ENCODE measurements at regions of chr7 and their contacts with region 1.

Region 1: DNA sequence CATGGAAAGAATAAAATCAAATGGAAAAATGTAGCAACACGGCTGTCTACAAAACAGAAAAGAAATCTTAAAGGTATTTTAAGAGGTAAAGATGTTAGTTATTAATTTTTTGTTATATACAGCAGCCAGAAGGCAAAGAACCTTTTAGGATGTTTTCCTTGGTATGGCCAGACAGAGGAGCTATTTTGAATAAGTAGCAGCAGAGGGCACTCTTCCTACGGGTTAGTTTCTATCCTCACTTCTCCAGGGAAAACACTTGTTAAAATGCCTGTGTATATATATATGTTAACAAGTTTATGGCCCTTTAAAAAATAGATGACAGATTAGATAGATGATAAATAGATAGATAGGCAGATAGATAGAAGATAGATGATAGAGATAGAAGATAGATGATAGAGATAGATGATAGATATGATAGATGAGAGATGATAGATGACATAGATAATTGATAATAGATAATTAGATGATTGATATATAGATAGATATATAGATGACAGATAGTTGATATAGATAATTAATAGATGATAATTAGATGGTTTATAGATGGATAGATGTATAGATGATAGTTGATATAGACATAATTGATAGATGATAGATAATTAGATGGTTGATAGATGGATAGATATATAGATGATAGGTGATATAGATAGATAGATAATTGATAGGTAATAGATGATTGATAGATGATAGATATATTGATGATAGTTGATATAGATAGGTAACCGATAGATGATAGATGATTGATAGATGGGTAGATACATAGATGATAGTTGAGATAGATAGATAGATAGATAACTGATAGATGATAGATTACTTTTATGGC is 57.8 kb upstream of the WIPF3 start:
- DNase-seq: no peak

Region 2: GRCh38 chr7:29639881-29640595 is 108.5 kb before region 1 on chr7:
- intact Hi-C with region 1: no loop called
- DNase-seq: no peak

Region 3: DNA sequence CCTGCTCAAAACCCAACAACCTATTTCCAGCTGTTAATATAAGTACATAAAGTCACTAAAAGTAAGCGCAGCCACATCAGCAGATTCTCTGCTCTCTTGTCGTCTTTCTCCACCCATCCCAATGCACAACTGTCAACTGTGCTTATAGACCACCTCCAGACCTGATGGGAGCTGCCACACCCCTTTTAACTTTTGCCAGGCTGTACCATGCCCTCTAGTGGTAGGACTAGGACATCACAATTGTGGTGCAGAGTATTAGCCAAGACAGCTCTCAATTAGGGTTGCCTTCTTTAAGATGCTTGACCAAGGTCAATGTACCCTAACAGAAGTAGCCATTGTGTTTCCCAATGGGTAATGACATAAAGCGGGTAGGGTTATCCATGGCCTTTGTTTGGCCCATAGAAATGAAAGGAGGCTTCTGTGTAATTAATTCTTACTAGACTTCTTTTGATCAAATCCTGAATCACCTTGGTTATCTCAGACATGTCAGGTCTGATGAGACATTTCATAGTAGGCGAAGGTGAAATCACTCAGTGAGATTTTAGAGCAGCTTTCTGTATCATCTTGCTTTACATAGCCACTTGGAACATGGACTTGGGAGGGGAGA is 173.0 kb after region 1 on chr7:
- intact Hi-C with region 1: loop called (anchors 2 kb)
- DNase-seq: peak in 1 of 10 donors; percentile 85

Region 4: GRCh38 chr7:30062591-30062990 is 314.1 kb after region 1 on chr7:
- intact Hi-C with region 1: loop called (anchors 2 kb)
- DNase-seq: no peak

Measured in posterior cingulate gyrus (tissue), 11 donors.